ENCODE measurements at regions of chr14 and their contacts with region 1.

Region 1: GRCh38 chr14:67571272-67571850 is 28.7 kb downstream of the PIGH start:
- DNase-seq: peak; percentile 66 to 87 (median 82)
- ATAC-seq: peak; percentile 74 to 81
- H3K4me3 ChIP-seq: no peak overlapping the region
- H3K27ac ChIP-seq: no peak overlapping the region
- H3K4me1 ChIP-seq: no peaks in the 10 kb centered on the region
- H3K27me3 ChIP-seq: no peaks in the 10 kb centered on the region

Region 2: DNA sequence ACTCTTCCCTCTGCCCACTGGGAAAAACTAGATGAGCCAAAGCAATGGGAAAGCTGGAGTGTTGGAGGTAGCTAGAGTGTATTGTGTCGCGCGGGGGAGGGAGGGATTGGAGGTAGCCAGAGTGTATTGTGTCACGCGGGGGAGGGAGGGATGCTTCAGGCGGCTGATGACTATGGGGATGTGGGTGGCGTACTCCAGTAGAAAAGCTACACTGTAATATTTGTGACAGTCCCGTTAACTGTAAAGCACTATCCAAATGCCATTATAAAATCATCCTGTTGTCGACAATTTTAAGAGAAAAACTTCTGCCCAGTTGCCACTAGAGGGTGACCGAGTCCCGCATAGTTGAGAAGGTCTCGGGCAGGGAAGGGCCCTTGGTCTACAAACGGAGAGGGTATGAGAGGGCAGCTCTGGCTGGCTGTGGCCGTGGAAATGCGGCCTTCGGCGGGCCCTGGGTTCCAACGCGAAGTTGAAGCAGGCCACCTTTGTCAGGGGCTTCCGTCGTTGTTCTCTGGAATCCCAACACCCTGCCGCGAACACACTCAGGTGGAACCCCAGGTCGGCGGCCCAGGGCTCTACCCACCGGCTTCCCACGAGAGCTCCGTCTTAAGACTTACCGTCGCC is 144.3 kb before region 1 on chr14:
- intact Hi-C with region 1: loop called (anchors 1 to 5 kb)
- DNase-seq: peak; percentile 77 to 83 (median 77)
- ATAC-seq: peak; percentile 84 to 86
- H3K4me3 ChIP-seq: no peak overlapping the region
- H3K27ac ChIP-seq: no peak overlapping the region
- H3K4me1 ChIP-seq: no peaks in the 10 kb centered on the region
- H3K27me3 ChIP-seq: no peaks in the 10 kb centered on the region

Region 3: GRCh38 chr14:67526676-67527459 is 44.5 kb before region 1 on chr14:
- intact Hi-C with region 1: loop called in 3 of 4 experiments (anchors 5 to 10 kb)
- DNase-seq: peak in 1 of 3 donors; percentile 20
- ATAC-seq: peak; percentile 51 to 70
- H3K4me3 ChIP-seq: no peak overlapping the region
- H3K27ac ChIP-seq: no peak overlapping the region
- H3K4me1 ChIP-seq: no peaks in the 10 kb centered on the region
- H3K27me3 ChIP-seq: no peaks in the 10 kb centered on the region

Region 4: DNA sequence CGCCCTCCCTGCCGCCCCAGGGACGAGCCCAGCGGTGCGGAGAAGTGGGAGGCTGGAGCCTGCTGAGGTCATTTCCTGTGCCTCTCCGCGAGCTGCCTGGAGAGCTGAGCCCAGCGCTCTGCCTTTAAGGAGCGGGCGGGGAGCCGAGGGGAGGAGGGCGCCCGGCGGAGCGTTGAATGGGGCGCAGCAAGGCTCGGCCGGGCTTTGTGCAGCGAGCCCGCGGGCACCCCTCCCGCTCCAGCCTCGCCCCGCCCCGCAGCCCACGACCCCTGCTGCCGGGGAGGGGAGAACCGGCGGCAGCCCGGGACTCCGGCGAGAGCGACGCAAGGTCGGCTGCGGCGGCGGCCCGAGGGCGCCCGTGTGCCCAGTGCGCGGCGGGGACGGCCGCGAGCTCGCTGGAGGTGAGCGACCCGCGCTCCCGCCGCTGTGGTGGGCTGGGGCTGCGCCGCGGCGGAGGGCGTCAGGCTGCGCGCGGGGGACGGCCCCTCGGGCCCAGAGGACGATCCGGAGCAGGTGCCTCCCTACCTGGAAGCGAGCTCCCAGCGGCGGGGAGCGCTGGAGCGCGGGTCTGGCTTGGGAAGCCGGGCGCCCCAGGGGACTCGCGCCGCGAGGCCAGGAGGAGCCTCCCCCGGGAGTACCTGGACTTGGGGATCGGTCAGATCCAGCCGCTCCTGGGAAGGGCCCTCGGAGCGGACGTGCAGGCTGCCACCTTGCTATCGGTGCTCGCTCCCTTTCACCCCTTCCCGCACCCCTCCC is 38.2 kb before region 1 on chr14 and contains the start of gene PLEKHH1:
- intact Hi-C with region 1: loop called in 3 of 4 experiments (anchors 5 to 10 kb)
- DNase-seq: peak; percentile 83 to 90 (median 89)
- ATAC-seq: peak; percentile 97 to 98
- H3K4me3 ChIP-seq: peak within 1 kb of the TSS; percentile 44
- H3K27ac ChIP-seq: no peak within 1 kb of the TSS
- H3K4me1 ChIP-seq: no peaks in the 10 kb centered on the region
- H3K27me3 ChIP-seq: no peaks in the 10 kb centered on the region
- total RNA-seq, gene PLEKHH1: 2.5 to 6.5 (median 4.2) TPM

Measured in right cardiac atrium (tissue), 5 donors.